IMR-90 (cell line): ENCODE measurements at regions of chr2 and their contacts with region 1.

Region 1: GRCh38 chr2:80499095-80499494 is 194.5 kb upstream of the LRRTM1 start:
- DNase-seq: peak; percentile 65
- ATAC-seq: peak; percentile 72; the same call in 1 of the 2 replicates
- H3K4me3 ChIP-seq: no peak overlapping the region
- H3K27ac ChIP-seq: no peak overlapping the region
- H3K4me1 ChIP-seq: peaks cover 4% of the 10 kb centered on the region; the same call in 1 of the 2 replicates
- H3K27me3 ChIP-seq: no peaks in the 10 kb centered on the region
- CTCF ChIP-seq: peak; percentile 78
- POLR2A ChIP-seq: no peak
- RAD21 ChIP-seq: peak; percentile 76

Region 2: DNA sequence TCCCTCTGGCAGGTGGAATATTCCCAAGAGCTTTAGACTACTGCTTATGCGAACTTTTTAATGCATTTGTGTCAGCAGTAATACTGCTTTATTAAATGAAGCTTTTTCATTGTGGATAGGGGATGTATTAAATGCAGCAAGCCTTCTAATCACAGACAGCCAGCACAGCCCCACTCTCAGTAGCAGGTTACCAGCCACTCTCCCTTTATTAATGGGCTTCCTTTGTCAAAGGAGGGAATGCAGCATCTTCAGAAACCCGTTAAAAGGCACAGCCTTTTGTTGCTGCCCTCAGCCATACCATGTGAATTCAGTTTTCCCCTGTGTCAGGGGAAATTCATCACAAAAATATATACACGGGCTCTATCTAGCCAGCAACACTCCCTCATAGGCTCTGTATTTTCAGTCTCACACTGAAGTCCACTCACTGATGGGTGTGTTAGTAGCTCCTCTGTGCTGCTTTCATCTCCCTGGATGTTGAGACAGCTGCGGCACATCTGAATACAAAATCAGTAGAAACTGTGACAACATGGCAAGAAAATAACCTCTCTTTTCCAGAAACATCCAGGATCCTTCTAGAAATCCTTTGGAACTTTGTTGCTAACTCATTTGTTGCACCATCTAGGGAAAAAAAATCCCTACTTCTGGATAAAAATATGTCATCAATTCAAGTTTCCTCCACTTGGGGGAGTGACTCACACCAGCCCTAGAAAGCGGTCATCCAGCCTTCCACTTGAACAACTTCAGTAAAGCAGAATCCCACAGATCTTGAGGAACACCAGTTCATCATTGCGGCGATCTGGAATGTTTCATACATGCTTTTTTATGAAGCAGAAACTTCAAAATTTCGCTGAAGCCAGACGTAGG is 242.9 kb before region 1 on chr2:
- CTCF ChIA-PET with region 1: no interaction called
- POLR2A ChIA-PET with region 1: no interaction called
- dilution Hi-C with region 1: no loop called
- in situ Hi-C with region 1: no loop called
- intact Hi-C with region 1: loop called (anchors 10 kb)
- DNase-seq: peak; percentile 27
- ATAC-seq: no peak
- H3K4me3 ChIP-seq: no peak overlapping the region
- H3K27ac ChIP-seq: no peak overlapping the region
- H3K4me1 ChIP-seq: no peaks in the 10 kb centered on the region
- H3K27me3 ChIP-seq: no peaks in the 10 kb centered on the region; the same call in 1 of the 2 replicates
- CTCF ChIP-seq: peak; percentile 43
- POLR2A ChIP-seq: no peak
- RAD21 ChIP-seq: peak; percentile 48

Region 3: GRCh38 chr2:80288576-80288975 is 210.5 kb before region 1 on chr2:
- CTCF ChIA-PET with region 1: interaction called, 3 read pairs
- POLR2A ChIA-PET with region 1: no interaction called
- dilution Hi-C with region 1: no loop called
- in situ Hi-C with region 1: no loop called
- intact Hi-C with region 1: loop called (anchors 1 kb)
- DNase-seq: no peak
- ATAC-seq: no peak
- H3K4me3 ChIP-seq: no peak overlapping the region
- H3K27ac ChIP-seq: no peak overlapping the region
- H3K4me1 ChIP-seq: no peaks in the 10 kb centered on the region
- H3K27me3 ChIP-seq: peaks cover 2% of the 10 kb centered on the region; the same call in 1 of the 2 replicates
- CTCF ChIP-seq: peak; percentile 29
- POLR2A ChIP-seq: no peak
- RAD21 ChIP-seq: peak; percentile 44

Region 4: DNA sequence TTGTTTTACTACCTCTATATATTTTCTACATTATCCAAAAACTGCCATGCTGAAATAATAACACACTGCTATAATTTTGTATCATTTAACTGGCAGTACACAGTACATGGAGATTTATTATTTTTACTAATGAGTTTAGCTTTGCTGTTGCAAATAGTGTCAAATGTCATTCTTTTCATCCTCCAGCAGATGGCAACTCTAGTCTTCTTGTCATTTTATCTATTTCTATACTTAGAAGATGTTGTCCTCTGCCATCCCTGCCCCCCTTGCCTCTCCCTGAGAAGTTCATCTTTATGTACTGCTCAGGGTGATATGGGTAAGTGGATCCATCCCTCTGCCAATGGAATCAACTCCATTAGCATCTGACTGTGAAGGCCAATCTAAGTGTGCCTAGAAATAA is 172.9 kb before region 1 on chr2:
- CTCF ChIA-PET with region 1: interaction called, 6 read pairs
- POLR2A ChIA-PET with region 1: no interaction called
- dilution Hi-C with region 1: no loop called
- in situ Hi-C with region 1: loop called (anchors 10 kb)
- intact Hi-C with region 1: loop called (anchors 1 kb)
- DNase-seq: peak; percentile 19
- ATAC-seq: 0 out of 2 replicates have a peak, but pooled peaks have one; percentile 29
- H3K4me3 ChIP-seq: no peak overlapping the region
- H3K27ac ChIP-seq: no peak overlapping the region
- H3K4me1 ChIP-seq: no peaks in the 10 kb centered on the region
- H3K27me3 ChIP-seq: peaks cover 11% of the 10 kb centered on the region
- CTCF ChIP-seq: peak; percentile 40
- POLR2A ChIP-seq: no peak
- RAD21 ChIP-seq: peak; percentile 46

Region 5: GRCh38 chr2:81160959-81161358 is 661.9 kb after region 1 on chr2:
- CTCF ChIA-PET with region 1: no interaction called
- POLR2A ChIA-PET with region 1: no interaction called
- dilution Hi-C with region 1: no loop called
- in situ Hi-C with region 1: no loop called
- intact Hi-C with region 1: no loop called
- DNase-seq: no peak
- ATAC-seq: no peak
- H3K4me3 ChIP-seq: no peak overlapping the region
- H3K27ac ChIP-seq: no peak overlapping the region
- H3K4me1 ChIP-seq: no peaks in the 10 kb centered on the region
- H3K27me3 ChIP-seq: no peaks in the 10 kb centered on the region
- CTCF ChIP-seq: no peak
- POLR2A ChIP-seq: no peak
- RAD21 ChIP-seq: no peak